Activated B cell treated with CpG ODN at 0.5 μM for 24 hours (primary cell): ENCODE measurements at regions of chr1 and their contacts with region 1.

Region 1: DNA sequence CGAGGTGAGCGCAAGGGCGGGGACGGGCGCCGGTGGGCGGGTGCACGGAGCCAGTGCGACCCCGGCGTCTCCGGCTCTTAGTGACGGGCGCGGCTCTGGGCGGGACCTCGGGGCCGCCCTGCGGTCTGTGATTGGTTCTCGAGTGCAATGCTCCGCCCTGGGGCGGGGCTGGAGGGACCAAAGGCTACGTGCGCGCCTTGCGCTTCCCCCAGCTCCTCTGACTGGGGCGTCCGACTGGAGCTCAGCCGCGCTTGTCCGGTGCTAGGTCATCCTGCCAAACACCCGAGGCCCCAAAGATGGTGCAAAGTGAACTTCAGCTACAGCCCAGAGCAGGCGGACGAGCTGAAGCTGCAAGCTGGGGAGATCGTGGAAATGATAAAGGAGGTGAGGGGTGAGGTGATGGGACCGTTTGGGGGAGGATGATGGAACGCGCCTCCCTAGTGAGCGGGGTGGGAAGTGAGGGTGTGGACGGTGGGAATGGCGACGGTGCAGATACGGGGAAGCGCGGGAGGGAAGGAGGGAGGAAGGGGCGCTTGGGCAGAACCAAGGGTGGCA is 811 bp downstream of the SH3D21 start:
- DNase-seq: peak; percentile 94
- ATAC-seq: peak; percentile 98
- H3K4me3 Mint-ChIP-seq: peak overlapping the region; percentile 97
- H3K27ac Mint-ChIP-seq: peak overlapping the region; percentile 88
- H3K4me1 Mint-ChIP-seq: peaks cover 40% of the 10 kb centered on the region
- H3K27me3 Mint-ChIP-seq: no peaks in the 10 kb centered on the region
- CTCF ChIP-seq: no peak

Region 2: GRCh38 chr1:36239941-36240637 is 66.9 kb before region 1 on chr1:
- CTCF ChIA-PET with region 1: no interaction called
- POLR2A ChIA-PET with region 1: no interaction called
- intact Hi-C with region 1: no loop called
- DNase-seq: no peak
- ATAC-seq: no peak
- H3K4me3 Mint-ChIP-seq: no peak overlapping the region
- H3K27ac Mint-ChIP-seq: peak overlapping the region; percentile 59
- H3K4me1 Mint-ChIP-seq: peaks cover 46% of the 10 kb centered on the region
- H3K27me3 Mint-ChIP-seq: no peaks in the 10 kb centered on the region
- CTCF ChIP-seq: no peak

Region 3: GRCh38 chr1:36323597-36324352 is 16.8 kb after region 1 on chr1 and contains the start of gene EVA1B:
- CTCF ChIA-PET with region 1: interaction called, 3 read pairs
- POLR2A ChIA-PET with region 1: interaction called, 10 read pairs
- intact Hi-C with region 1: loop called (anchors 1 kb)
- DNase-seq: no peak
- ATAC-seq: peak; percentile 26
- H3K4me3 Mint-ChIP-seq: peak within 1 kb of the TSS; percentile 76
- H3K27ac Mint-ChIP-seq: no peak within 1 kb of the TSS
- H3K4me1 Mint-ChIP-seq: peaks cover 32% of the 10 kb centered on the region
- H3K27me3 Mint-ChIP-seq: peaks cover 18% of the 10 kb centered on the region
- CTCF ChIP-seq: no peak
- total RNA-seq, gene EVA1B: 1.2 and 1.3 TPM in 2 replicates

Region 4: DNA sequence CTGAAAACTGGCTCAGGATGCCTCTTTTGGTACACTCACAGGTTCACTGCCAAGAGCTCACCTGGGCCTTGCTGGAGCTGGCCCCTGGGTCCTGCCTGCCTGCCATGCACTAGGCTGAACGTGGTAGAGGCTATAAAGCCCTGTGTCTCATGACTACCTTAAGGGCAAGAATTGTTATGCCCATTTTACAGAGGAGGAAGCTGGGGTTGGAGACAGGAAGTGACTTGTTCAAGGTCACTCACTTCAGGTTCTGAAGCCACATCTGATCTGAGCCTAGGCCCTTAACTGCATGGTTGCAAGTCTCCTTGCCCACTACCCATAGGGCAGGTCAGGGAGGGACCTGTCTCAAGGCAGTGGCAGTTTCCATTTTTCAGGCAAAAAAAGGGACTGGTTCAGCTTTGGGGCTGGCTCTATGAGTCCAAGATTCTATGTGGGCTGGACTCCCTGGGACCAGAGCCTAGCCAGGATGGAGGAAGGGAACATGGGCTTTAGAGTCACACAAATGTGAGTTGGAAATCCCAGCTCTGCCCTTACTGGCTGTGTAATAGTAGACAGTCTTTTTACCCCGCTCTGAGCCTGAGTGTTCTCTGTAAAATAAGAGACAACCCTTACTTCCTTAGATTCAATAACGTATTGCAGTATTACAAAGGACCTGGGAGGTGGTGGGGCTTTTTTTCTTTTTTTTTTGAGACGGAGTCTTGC is 71.0 kb after region 1 on chr1:
- CTCF ChIA-PET with region 1: no interaction called
- POLR2A ChIA-PET with region 1: no interaction called
- intact Hi-C with region 1: no loop called
- DNase-seq: no peak
- ATAC-seq: no peak
- H3K4me3 Mint-ChIP-seq: peak overlapping the region; percentile 7
- H3K27ac Mint-ChIP-seq: peak overlapping the region; percentile 84
- H3K4me1 Mint-ChIP-seq: peaks cover 84% of the 10 kb centered on the region
- H3K27me3 Mint-ChIP-seq: no peaks in the 10 kb centered on the region
- CTCF ChIP-seq: no peak

Region 5: DNA sequence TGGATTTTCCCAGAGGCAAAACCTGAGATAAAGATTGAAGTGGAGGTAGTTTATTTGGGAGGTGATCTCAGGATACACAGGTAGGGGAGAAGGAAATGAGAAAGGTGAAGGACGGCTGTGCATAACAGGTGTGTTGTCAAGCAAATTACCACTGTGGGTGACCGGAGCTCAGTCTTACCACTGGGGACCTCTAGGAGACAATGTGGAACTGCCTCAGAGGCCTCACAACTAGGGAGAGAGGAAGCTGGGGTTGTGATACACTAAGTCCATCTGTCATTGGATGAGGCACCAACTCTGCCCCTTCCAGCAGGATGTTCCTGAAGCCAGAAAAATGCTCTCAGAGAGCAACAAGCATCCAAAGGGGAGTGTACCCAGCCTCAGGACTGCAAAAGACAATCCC is 694.7 kb after region 1 on chr1:
- CTCF ChIA-PET with region 1: no interaction called
- POLR2A ChIA-PET with region 1: no interaction called
- intact Hi-C with region 1: no loop called
- DNase-seq: no peak
- ATAC-seq: no peak
- H3K4me3 Mint-ChIP-seq: no peak overlapping the region
- H3K27ac Mint-ChIP-seq: no peak overlapping the region
- H3K4me1 Mint-ChIP-seq: no peaks in the 10 kb centered on the region
- H3K27me3 Mint-ChIP-seq: peaks cover 7% of the 10 kb centered on the region
- CTCF ChIP-seq: no peak